Mammary epithelial cell (primary cell): ENCODE measurements at regions of chr1 and their contacts with region 1.

Region 1: DNA sequence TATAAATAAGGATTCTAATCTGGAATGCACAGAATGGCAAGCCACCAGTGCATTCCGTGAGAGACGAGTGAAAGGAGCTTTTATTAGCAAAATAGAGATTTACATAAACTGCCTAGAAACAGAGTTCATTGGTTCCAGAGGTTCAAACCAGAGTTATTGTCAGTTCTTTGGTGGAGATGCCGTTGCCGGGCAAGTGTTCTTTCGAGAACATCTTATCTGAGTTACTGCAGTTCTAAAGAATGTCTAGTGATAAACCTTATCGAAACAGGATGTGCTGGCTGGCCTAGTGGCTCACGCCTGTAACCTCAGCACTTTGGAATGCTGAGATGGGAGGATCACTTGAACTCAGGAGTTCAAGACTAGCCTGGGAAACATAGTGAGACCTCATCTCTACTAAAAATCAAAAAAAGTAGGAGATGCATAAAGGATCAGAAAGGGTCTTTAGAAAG is 19.8 kb upstream of the EVI5 start:
- DNase-seq: peak; percentile 92
- H3K4me3 ChIP-seq: no peak overlapping the region
- H3K27ac ChIP-seq: peak overlapping the region; percentile 74
- H3K4me1 ChIP-seq: peaks cover 25% of the 10 kb centered on the region
- H3K27me3 ChIP-seq: no peaks in the 10 kb centered on the region
- CTCF ChIP-seq: no peak

Region 2: DNA sequence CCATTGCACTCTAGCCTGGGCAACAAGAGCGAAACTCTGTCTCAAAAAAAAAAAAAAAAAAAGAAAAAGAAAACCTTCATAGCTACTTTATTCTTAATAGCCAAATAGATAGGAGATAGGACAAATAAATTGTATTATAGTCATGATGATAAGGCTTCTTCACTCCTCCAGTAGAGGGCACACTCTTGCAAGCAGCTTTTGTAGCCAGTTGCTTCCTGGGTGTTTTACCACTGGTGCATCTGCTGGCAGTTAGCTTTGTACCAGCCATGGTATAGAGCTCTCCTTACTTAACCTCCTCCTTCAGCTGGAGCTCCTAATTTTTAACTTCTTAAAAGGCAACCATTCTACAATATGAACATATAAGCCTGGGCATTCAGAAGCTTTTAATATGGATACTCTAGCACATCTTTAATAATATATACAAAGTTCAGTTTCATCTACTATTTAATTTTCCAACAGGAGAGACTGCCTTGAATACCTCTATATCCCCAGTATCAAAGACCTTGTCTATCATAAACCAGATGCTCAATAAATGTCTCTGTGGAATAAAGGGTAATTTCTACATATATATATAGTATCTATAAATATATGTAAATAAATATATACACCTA is 55.6 kb before region 1 on chr1:
- CTCF ChIA-PET with region 1: interaction called, 18 read pairs
- dilution Hi-C with region 1: no loop called
- in situ Hi-C with region 1: loop called in 1 of 2 experiments (anchors 10 kb)
- intact Hi-C with region 1: no loop called
- DNase-seq: peak; percentile 54
- H3K4me3 ChIP-seq: no peak overlapping the region
- H3K27ac ChIP-seq: no peak overlapping the region
- H3K4me1 ChIP-seq: peaks cover 18% of the 10 kb centered on the region
- H3K27me3 ChIP-seq: no peaks in the 10 kb centered on the region
- CTCF ChIP-seq: peak; percentile 80 to 91

Region 3: DNA sequence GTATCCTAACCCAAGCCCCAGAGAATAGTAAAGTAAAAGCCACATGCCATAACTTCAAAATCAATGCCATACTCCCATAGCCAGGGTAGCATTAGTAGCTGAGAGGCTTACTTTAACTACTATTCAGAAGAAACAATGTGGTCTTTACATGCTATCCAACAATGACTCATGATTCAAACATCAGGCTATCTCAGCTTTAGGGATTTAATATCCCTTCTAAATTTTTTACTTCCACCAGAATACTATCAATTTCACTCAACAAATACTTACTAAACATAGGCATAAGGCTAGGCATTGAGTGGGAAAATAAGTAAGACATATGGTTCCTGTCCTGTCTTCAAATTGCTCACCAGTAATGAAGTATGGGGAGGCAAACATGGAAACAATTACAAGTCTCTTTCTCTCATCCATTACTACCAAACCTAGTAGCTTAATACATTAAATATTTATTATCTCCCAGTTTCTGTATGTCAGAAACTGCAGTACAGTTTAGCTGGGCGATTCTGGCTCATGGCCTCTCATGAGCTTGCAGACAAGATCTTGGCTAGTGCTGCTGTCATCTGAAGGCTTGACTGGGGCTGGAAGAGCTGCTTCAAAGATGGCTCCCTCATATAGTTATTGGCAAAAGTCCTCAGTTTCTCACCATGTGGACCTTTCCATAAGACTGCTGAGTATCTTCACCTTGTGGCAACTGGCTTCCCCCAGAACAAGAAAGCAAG is 50.6 kb before region 1 on chr1:
- CTCF ChIA-PET with region 1: no interaction called
- dilution Hi-C with region 1: no loop called
- in situ Hi-C with region 1: loop called in 1 of 2 experiments (anchors 10 kb)
- intact Hi-C with region 1: no loop called
- DNase-seq: peak; percentile 35
- H3K4me3 ChIP-seq: no peak overlapping the region
- H3K27ac ChIP-seq: no peak overlapping the region
- H3K4me1 ChIP-seq: peaks cover 19% of the 10 kb centered on the region
- H3K27me3 ChIP-seq: no peaks in the 10 kb centered on the region
- CTCF ChIP-seq: no peak

Region 4: GRCh38 chr1:92822879-92823278 is 18.1 kb after region 1 on chr1:
- CTCF ChIA-PET with region 1: no interaction called
- dilution Hi-C with region 1: no loop called
- in situ Hi-C with region 1: no loop called
- intact Hi-C with region 1: no loop called
- DNase-seq: no peak
- H3K4me3 ChIP-seq: no peak overlapping the region
- H3K27ac ChIP-seq: no peak overlapping the region
- H3K4me1 ChIP-seq: peaks cover 6% of the 10 kb centered on the region
- H3K27me3 ChIP-seq: no peaks in the 10 kb centered on the region
- CTCF ChIP-seq: no peak